Activated T-helper 1 cell treated with anti-CD3 and anti-CD28 coated beads, Interleukin-12 subunit alpha, Interleukin-12 subunit beta, Interleukin-2, Interleukin-4 antibody, amounts not matched to agents 30 ng/mL and 10 ng/mL and 1 ng/mL, durations not matched to agents 14 hours and 24 hours and 36 hours (primary cell): ENCODE measurements at regions of chr6 and their contacts with region 1.

Region 1: GRCh38 chr6:11324453-11325015 is 92.1 kb upstream of the NEDD9 start:
- DNase-seq: peak; percentile 54
- H3K4me3 Mint-ChIP-seq: peak overlapping the region; percentile 65
- H3K27ac Mint-ChIP-seq: peak overlapping the region; percentile 97
- H3K4me1 Mint-ChIP-seq: peaks cover 91% of the 10 kb centered on the region
- H3K27me3 Mint-ChIP-seq: no peaks in the 10 kb centered on the region

Region 2: DNA sequence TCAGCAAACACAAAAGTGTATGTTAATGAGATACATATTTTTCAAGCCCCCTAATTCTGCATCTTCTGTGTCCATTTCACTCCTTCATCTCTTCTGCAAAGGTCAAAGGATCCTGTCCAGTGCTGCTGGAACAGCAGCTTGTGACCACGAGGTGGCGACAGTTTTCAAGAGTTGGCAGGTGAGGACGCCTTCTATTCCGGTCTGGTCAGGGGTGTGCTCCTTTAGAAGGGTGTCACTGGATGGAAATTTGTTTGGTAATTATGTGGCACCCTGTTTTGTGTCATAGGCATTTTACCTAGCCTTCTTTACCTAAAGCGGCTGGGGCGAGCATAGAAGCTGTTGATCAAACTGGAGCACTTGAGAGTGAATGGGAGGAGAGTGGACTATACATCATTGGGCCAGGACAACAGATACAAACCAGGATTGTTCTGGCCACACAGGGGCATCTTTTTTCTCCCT is 180.1 kb before region 1 on chr6:
- intact Hi-C with region 1: loop called (anchors 2 kb)
- DNase-seq: peak; percentile 65
- H3K4me3 Mint-ChIP-seq: no peak overlapping the region
- H3K27ac Mint-ChIP-seq: no peak overlapping the region
- H3K4me1 Mint-ChIP-seq: peaks cover 16% of the 10 kb centered on the region
- H3K27me3 Mint-ChIP-seq: peaks cover 1% of the 10 kb centered on the region

Region 3: DNA sequence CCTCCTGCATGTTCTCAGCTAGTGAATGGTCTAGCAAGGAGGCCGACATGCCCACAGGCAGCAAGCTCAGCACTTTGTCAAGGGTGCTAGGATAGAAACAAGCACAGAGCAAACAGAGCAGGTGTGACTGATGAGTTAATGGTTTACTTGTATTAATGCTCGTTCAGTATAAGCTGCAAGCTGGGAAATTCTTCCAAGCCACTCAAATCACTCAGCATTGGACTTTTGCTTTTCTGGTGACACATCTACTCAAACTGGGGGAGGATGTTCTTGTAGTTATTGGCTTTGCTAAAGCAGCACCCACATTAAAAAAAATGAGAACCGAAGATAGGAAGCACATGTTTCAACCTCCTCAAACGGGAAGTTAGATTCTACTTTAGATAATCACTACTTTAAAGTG is 48.9 kb before region 1 on chr6:
- intact Hi-C with region 1: loop called (anchors 1 kb)
- DNase-seq: no peak
- H3K4me3 Mint-ChIP-seq: peak overlapping the region; percentile 0
- H3K27ac Mint-ChIP-seq: peak overlapping the region; percentile 41
- H3K4me1 Mint-ChIP-seq: peaks cover 43% of the 10 kb centered on the region
- H3K27me3 Mint-ChIP-seq: no peaks in the 10 kb centered on the region

Region 4: DNA sequence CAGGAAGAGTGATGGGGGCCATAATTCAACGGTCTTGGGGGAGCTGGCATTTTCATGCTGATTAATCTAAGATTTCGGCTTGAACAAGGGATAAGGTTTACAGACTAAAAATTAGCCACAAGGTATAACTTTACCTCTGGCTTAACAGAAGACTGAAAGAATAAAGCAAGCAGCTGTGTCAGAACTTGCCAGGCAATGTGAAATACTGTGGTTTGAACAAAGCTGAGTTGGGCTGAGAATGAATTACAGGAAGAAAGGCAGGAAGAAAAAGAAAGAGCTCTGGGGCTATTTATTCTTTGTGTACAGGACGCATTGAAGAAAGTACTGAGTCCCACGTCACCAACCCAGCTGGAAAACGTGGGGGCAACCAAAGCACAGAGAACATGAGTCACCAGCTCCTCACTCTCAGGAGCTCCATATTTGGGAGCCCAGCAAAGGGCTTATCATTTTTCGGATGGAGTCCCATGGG is 29.4 kb after region 1 on chr6:
- intact Hi-C with region 1: loop called (anchors 1 kb)
- DNase-seq: peak; percentile 58
- H3K4me3 Mint-ChIP-seq: peak overlapping the region; percentile 74
- H3K27ac Mint-ChIP-seq: peak overlapping the region; percentile 93
- H3K4me1 Mint-ChIP-seq: peaks cover 90% of the 10 kb centered on the region
- H3K27me3 Mint-ChIP-seq: no peaks in the 10 kb centered on the region

Region 5: DNA sequence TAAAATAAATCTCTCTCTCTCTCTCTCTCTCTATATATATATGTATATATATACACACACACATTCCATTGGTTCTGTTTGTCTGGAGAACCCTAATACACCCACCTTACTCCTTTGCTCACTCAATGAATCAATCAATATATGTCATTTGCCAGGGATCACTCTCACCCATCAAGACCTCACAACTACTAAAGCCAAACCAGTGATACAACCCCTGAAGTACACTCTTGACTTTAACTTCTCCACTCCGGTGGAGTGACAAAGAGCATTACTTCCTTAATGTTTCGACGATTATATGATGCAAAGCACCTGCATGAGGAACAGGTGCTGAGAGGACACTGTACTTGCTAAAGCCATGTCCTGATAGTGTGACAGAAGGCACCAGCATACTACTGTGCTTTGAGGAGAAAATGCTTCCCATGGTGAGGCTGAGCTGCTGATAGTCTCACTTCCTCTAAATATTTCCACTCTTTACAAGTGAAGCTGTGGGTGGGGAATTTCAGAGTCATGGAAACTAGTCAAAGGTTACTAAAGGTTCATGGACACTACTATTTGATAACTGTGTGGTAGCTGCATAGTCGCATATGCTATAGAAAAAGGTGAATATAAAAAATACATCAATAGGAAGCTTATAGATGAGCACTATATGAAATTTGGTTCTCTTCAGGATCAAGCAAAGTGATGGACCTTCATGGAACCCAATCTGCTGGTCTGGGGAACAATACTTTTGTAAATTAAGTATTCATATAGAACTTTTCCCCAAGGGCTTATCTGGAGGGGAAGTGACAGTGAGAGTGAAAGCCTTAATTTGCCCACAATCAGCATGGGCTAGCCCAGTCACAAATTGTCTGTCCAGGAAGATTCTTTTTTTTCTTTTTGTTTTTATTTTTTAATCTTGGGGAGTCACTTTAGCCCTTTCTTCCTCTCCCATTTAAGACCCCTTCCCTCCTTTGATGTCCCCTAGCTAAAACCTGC is 49.8 kb after region 1 on chr6:
- intact Hi-C with region 1: loop called (anchors 1 kb)
- DNase-seq: no peak
- H3K4me3 Mint-ChIP-seq: peak overlapping the region; percentile 65
- H3K27ac Mint-ChIP-seq: peak overlapping the region; percentile 94
- H3K4me1 Mint-ChIP-seq: peaks cover 72% of the 10 kb centered on the region
- H3K27me3 Mint-ChIP-seq: no peaks in the 10 kb centered on the region

Region 6: DNA sequence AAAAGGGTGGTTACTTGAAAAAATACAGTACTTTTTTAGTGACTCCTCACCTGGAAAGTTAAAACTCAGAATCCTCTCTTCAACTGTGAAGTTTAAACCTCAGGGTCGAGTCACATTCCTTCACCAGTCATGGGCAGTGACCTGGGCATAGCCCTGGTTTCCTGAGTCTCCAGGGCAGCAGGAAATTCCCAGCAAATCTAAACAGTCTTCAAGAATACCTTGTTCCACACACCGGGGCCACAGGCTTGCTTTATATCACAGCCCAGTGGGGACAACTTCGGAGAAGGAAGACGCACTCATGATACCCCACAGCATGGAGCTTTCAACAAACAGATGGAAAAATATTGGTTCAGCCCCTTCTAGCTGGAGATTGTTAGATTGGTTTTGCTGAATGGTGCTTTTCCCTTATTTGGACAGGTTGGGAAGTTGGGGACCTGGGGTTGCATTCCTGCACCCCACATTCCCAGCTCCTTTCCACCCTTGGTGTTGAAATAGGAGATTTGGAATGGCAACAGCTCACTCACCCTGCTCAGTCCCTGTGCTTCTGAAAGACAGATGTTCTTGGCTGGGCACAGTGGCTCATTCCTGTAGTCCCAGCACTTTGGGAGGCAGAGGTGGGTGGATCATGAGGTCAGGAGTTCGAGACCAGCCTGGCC is 100.0 kb after region 1 on chr6:
- intact Hi-C with region 1: loop called (anchors 1 kb)
- DNase-seq: no peak
- H3K4me3 Mint-ChIP-seq: no peak overlapping the region
- H3K27ac Mint-ChIP-seq: peak overlapping the region; percentile 7
- H3K4me1 Mint-ChIP-seq: peaks cover 63% of the 10 kb centered on the region
- H3K27me3 Mint-ChIP-seq: no peaks in the 10 kb centered on the region